SK-N-SH (cell line): ENCODE measurements at regions of chr2 and their contacts with region 1.

Region 1: GRCh38 chr2:152354909-152355308 is 19.9 kb downstream of the FMNL2 start:
- DNase-seq: no peak
- H3K4me3 ChIP-seq: no peak overlapping the region
- H3K27ac ChIP-seq: peak overlapping the region in 1 of 2 experiments; percentile 9; a peak in 2 of 4 replicates
- H3K4me1 ChIP-seq: peaks cover 0 to 20% of the 10 kb centered on the region in 2 experiments; a peak in 2 of 4 replicates
- H3K27me3 ChIP-seq: no peaks in the 10 kb centered on the region
- CTCF ChIP-seq: no peak
- EP300 ChIP-seq: no peak
- RAD21 ChIP-seq: no peak

Region 2: DNA sequence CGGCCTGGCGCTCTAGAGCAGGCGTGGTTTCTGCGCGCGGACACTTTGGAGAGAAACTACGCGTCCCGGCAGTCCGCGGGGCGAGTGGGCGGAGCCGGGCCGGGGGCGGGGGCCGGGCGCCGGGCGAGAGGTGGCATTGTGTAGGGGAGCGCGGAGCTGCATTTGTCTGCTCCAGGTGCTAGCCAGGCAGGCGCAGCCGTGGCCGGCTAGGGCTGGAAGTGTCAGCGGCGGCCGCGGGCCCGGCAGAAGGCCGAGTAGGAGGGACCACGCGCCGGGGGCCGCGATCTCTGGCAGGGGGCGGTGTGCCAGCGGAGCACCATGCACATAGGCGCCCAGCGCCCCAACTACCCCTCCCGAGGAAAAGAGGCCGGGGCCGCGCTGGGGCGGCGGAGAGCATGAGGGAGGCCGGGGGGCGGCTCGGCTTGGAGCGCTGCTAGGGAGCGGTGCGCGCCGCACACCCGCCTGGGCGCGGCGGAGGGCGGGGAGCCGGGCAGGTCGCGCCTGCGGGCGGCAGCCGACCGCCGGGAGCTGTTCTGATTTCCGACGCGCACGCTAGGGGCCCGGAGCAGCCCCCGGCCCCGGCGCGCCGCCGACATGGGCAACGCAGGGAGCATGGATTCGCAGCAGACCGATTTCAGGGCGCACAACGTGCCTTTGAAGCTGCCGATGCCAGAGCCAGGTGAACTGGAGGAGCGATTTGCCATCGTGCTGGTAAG is 19.7 kb before region 1 on chr2 and contains the start of gene FMNL2:
- CTCF ChIA-PET with region 1: interaction called, 13 read pairs
- POLR2A ChIA-PET with region 1: no interaction called
- DNase-seq: peak; percentile 95
- H3K4me3 ChIP-seq: peak within 1 kb of the TSS; percentile 81 to 90
- H3K27ac ChIP-seq: peak within 1 kb of the TSS; percentile 52 to 83; a peak in 3 of 4 replicates
- H3K4me1 ChIP-seq: peaks cover 4 to 7% of the 10 kb centered on the region in 2 experiments; a peak in 3 of 4 replicates
- H3K27me3 ChIP-seq: no peaks in the 10 kb centered on the region
- CTCF ChIP-seq: peak; percentile 30; the same call in 1 of the 2 replicates
- EP300 ChIP-seq: no peak
- RAD21 ChIP-seq: no peak; the same call in none of the 2 replicates
- polyA plus RNA-seq, gene FMNL2: 14.5 and 16.1 TPM in 2 replicates